H1 (cell line): ENCODE measurements at regions of chr10 and their contacts with region 1.

Region 1: GRCh38 chr10:70549962-70550458 is 52.5 kb downstream of the PRF1 start:
- DNase-seq: peak in 1 of 2 experiments; percentile 92
- H3K4me3 ChIP-seq: no peak overlapping the region
- H3K27ac ChIP-seq: no peak overlapping the region
- H3K4me1 ChIP-seq: no peaks in the 10 kb centered on the region; a peak in 1 of 7 replicates
- H3K27me3 ChIP-seq: no peaks in the 10 kb centered on the region
- CTCF ChIP-seq: peak; percentile 78 to 84 (median 82)
- EP300 ChIP-seq: no peak
- POLR2A ChIP-seq: no peak
- RAD21 ChIP-seq: peak; percentile 92 to 94

Region 2: GRCh38 chr10:70418229-70418628 is 131.8 kb before region 1 on chr10:
- CTCF ChIA-PET with region 1: no interaction called
- POLR2A ChIA-PET with region 1: no interaction called
- DNase-seq: no peak
- H3K4me3 ChIP-seq: no peak overlapping the region
- H3K27ac ChIP-seq: no peak overlapping the region
- H3K4me1 ChIP-seq: peaks cover 0 to 2% (median 0%) of the 10 kb centered on the region in 4 experiments; a peak in 1 of 7 replicates
- H3K27me3 ChIP-seq: no peaks in the 10 kb centered on the region
- CTCF ChIP-seq: no peak
- EP300 ChIP-seq: no peak
- POLR2A ChIP-seq: no peak; a peak in 1 of 3 replicates
- RAD21 ChIP-seq: no peak

Region 3: GRCh38 chr10:70584909-70585544 is 35.0 kb after region 1 on chr10:
- CTCF ChIA-PET with region 1: interaction called, 19 read pairs
- POLR2A ChIA-PET with region 1: no interaction called
- DNase-seq: peak; percentile 31 to 66
- H3K4me3 ChIP-seq: no peak overlapping the region
- H3K27ac ChIP-seq: no peak overlapping the region
- H3K4me1 ChIP-seq: peaks cover 0 to 6% (median 4%) of the 10 kb centered on the region in 4 experiments; a peak in 5 of 7 replicates
- H3K27me3 ChIP-seq: no peaks in the 10 kb centered on the region
- CTCF ChIP-seq: no peak
- EP300 ChIP-seq: no peak
- POLR2A ChIP-seq: no peak
- RAD21 ChIP-seq: peak in 1 of 2 experiments; percentile 6; a peak in 1 of 4 replicates

Region 4: DNA sequence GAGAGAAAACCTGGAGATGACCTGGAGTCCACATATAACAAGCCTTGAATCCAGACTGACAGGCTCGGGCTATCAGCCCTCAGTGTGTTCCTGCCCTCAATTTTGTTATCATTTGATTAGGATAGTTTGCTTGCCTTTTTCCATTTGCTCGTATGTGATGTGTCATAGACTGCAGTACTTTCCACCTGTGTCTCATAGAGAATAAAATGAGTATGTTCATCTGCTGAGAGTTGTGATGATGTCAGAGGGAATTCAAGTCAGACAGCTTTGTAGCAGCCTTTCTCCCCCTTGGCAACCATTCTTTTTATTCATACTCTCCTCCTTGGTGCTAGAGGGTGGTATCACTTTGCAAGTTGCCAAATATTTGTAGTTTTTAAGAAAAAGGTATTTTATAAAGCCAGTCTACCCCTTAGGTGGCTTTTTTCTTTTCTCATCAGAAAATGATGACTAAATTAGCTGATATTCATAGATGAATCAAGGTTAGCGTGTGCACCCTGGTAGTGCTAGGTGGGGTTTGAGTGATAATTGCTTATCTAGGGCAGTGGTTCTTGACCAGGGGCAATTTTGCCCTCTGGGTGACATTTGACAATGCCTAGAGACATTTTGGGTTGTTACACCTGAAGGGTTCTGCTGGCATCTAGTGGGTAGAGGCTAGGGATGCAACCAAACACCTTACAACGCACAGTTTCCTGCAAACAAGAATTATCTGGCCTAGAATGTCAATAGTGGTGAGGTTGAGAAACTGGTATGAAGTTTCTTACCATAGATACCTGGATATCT is 271.2 kb after region 1 on chr10:
- CTCF ChIA-PET with region 1: interaction called, 13 read pairs
- POLR2A ChIA-PET with region 1: interaction called, 3 read pairs
- DNase-seq: no peak
- H3K4me3 ChIP-seq: no peak overlapping the region
- H3K27ac ChIP-seq: no peak overlapping the region
- H3K4me1 ChIP-seq: no peaks in the 10 kb centered on the region
- H3K27me3 ChIP-seq: no peaks in the 10 kb centered on the region
- CTCF ChIP-seq: peak in 2 of 3 experiments; percentile 41 to 44; a peak in 3 of 4 replicates
- EP300 ChIP-seq: no peak
- POLR2A ChIP-seq: no peak
- RAD21 ChIP-seq: peak; percentile 60 to 69

Region 5: GRCh38 chr10:70880077-70880534 is 330.1 kb after region 1 on chr10:
- CTCF ChIA-PET with region 1: interaction called, 39 read pairs
- POLR2A ChIA-PET with region 1: no interaction called
- DNase-seq: peak in 1 of 2 experiments; percentile 70
- H3K4me3 ChIP-seq: no peak overlapping the region
- H3K27ac ChIP-seq: no peak overlapping the region
- H3K4me1 ChIP-seq: peaks cover 0 to 7% (median 2%) of the 10 kb centered on the region in 4 experiments; a peak in 3 of 7 replicates
- H3K27me3 ChIP-seq: no peaks in the 10 kb centered on the region
- CTCF ChIP-seq: peak; percentile 70 to 87 (median 77)
- EP300 ChIP-seq: no peak
- POLR2A ChIP-seq: no peak
- RAD21 ChIP-seq: peak; percentile 88 to 93